MCF 10A (cell line): ENCODE measurements at regions of chr5 and their contacts with region 1.

Region 1: GRCh38 chr5:159444441-159445082 is 114.3 kb upstream of the IL12B start:
- DNase-seq: peak; percentile 78
- H3K4me3 Mint-ChIP-seq: no peak overlapping the region
- H3K27ac Mint-ChIP-seq: no peak overlapping the region
- H3K4me1 Mint-ChIP-seq: peaks cover 11% of the 10 kb centered on the region
- H3K27me3 Mint-ChIP-seq: no peaks in the 10 kb centered on the region
- CTCF ChIP-seq: peak; percentile 84

Region 2: GRCh38 chr5:159286420-159287035 is 158.0 kb before region 1 on chr5:
- CTCF ChIA-PET with region 1: interaction called, 77 read pairs
- POLR2A ChIA-PET with region 1: no interaction called
- intact Hi-C with region 1: loop called (anchors 1 kb)
- DNase-seq: peak; percentile 62
- H3K4me3 Mint-ChIP-seq: no peak overlapping the region
- H3K27ac Mint-ChIP-seq: no peak overlapping the region
- H3K4me1 Mint-ChIP-seq: no peaks in the 10 kb centered on the region
- H3K27me3 Mint-ChIP-seq: no peaks in the 10 kb centered on the region
- CTCF ChIP-seq: peak; percentile 67

Region 3: GRCh38 chr5:159427180-159428012 is 17.2 kb before region 1 on chr5:
- CTCF ChIA-PET with region 1: interaction called, 17 read pairs
- POLR2A ChIA-PET with region 1: interaction called, 3 read pairs
- intact Hi-C with region 1: no loop called
- DNase-seq: no peak
- H3K4me3 Mint-ChIP-seq: no peak overlapping the region
- H3K27ac Mint-ChIP-seq: no peak overlapping the region
- H3K4me1 Mint-ChIP-seq: no peaks in the 10 kb centered on the region
- H3K27me3 Mint-ChIP-seq: no peaks in the 10 kb centered on the region
- CTCF ChIP-seq: no peak

Region 4: DNA sequence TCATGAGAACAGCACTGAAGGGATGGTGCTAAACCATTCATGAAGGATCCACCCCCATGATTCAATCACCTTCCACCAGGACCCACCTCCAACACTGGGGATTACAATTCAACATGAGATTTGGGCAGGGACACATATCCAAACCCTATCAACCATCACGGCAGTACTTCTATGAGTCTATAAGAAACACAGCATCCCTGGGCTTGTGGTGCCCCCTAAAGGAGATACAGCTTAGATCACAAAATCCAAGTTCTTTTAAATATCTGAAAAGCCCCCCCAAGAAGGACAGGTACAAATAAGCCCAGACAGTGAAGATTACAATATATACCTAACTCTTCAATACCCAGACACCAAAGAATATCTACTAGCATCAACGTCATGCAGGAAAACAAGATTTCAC is 238.1 kb after region 1 on chr5:
- CTCF ChIA-PET with region 1: interaction called, 4 read pairs
- POLR2A ChIA-PET with region 1: no interaction called
- intact Hi-C with region 1: loop called (anchors 1 kb)
- DNase-seq: peak; percentile 27
- H3K4me3 Mint-ChIP-seq: no peak overlapping the region
- H3K27ac Mint-ChIP-seq: no peak overlapping the region
- H3K4me1 Mint-ChIP-seq: no peaks in the 10 kb centered on the region
- H3K27me3 Mint-ChIP-seq: no peaks in the 10 kb centered on the region
- CTCF ChIP-seq: no peak

Region 5: GRCh38 chr5:159995907-159996306 is 551.3 kb after region 1 on chr5:
- CTCF ChIA-PET with region 1: interaction called, 304 read pairs
- POLR2A ChIA-PET with region 1: no interaction called
- intact Hi-C with region 1: no loop called
- DNase-seq: no peak
- H3K4me3 Mint-ChIP-seq: no peak overlapping the region
- H3K27ac Mint-ChIP-seq: no peak overlapping the region
- H3K4me1 Mint-ChIP-seq: no peaks in the 10 kb centered on the region
- H3K27me3 Mint-ChIP-seq: no peaks in the 10 kb centered on the region
- CTCF ChIP-seq: no peak